Right cardiac atrium (tissue), 5 donors: ENCODE measurements at regions of chr13 and their contacts with region 1.

Region 1: DNA sequence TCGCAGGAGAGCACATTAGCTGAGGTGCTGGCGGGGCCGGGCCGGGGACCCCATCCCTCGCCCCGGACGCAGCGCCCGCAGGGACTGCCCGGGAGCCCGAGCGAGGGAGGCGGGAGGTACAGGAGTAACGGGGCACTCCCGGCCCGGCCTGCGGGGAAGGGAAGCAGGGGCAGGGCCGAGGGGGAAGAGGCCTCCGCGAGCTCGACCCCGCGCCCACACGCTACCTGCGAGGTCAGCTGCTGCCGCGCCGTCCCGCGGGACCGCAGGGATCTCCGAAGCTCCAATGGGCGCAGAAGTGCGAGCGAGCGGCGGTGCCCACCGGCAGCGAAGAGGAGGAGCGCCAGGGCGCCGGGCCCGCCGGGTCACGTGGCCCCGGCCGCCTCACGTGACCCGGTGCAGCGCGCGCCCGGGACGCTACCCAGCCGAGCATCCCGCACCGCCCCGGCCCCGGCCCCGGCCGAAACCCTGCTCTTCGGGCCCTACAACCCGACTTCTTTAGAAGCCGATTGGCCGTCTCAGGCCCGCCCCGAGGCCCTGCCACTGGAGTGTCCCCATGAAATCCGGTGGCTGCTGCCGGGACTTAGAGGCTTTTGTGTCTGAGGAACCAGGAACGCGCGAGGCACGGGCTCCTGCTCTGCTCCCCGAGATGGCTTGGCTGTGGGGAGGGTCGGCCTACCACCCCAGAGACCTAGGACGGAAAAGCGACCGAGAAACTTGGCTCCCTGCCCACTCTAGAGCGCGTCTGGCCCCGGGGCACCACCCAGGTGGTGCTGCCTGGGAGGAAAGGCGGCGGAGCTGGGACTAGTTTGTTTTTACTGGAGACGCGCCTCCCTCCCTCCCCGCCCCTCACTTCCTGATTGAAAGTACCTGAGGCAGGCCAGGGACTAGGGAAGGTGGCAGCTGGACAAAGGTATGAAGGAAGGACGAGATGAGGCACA is at the start of gene RCBTB1:
- DNase-seq: peak; percentile 68 to 87 (median 86)
- ATAC-seq: peak; percentile 98 to 99
- H3K4me3 ChIP-seq: peak within 1 kb of the TSS; percentile 86
- H3K27ac ChIP-seq: peak within 1 kb of the TSS; percentile 61
- H3K4me1 ChIP-seq: no peaks in the 10 kb centered on the region
- H3K27me3 ChIP-seq: no peaks in the 10 kb centered on the region
- total RNA-seq, gene RCBTB1: 16.7 to 20.3 (median 19.0) TPM

Region 2: GRCh38 chr13:49454388-49455006 is 131.0 kb before region 1 on chr13:
- intact Hi-C with region 1: loop called in 1 of 4 experiments (anchors 10 kb)
- DNase-seq: no peak
- ATAC-seq: no peak
- H3K4me3 ChIP-seq: no peak overlapping the region
- H3K27ac ChIP-seq: no peak overlapping the region
- H3K4me1 ChIP-seq: no peaks in the 10 kb centered on the region
- H3K27me3 ChIP-seq: no peaks in the 10 kb centered on the region

Region 3: GRCh38 chr13:50208826-50209335 is 623.4 kb after region 1 on chr13:
- intact Hi-C with region 1: no loop called
- DNase-seq: peak; percentile 45 to 69 (median 69)
- ATAC-seq: peak; percentile 93 to 94
- H3K4me3 ChIP-seq: no peak overlapping the region
- H3K27ac ChIP-seq: peak overlapping the region; percentile 43
- H3K4me1 ChIP-seq: peaks cover 2% of the 10 kb centered on the region
- H3K27me3 ChIP-seq: no peaks in the 10 kb centered on the region